GM10248 (cell line): ENCODE measurements at regions of chr11 and their contacts with region 1.

Region 1: GRCh38 chr11:124758317-124759203 is 3.5 kb downstream of the ESAM start:
- DNase-seq: peak; percentile 80
- CTCF ChIP-seq: peak; percentile 90

Region 2: GRCh38 chr11:124633355-124633754 is 125.2 kb before region 1 on chr11:
- CTCF ChIA-PET with region 1: no interaction called
- POLR2A ChIA-PET with region 1: no interaction called
- DNase-seq: no peak
- CTCF ChIP-seq: peak; percentile 12

Region 3: GRCh38 chr11:124739479-124740276 is 18.9 kb before region 1 on chr11 and contains the start of gene NRGN:
- CTCF ChIA-PET with region 1: interaction called, 183 read pairs
- POLR2A ChIA-PET with region 1: no interaction called
- DNase-seq: peak; percentile 95
- CTCF ChIP-seq: no peak

Region 4: GRCh38 chr11:124746621-124747243 is 11.8 kb before region 1 on chr11:
- CTCF ChIA-PET with region 1: interaction called, 183 read pairs
- POLR2A ChIA-PET with region 1: no interaction called
- DNase-seq: peak; percentile 92
- CTCF ChIP-seq: peak; percentile 82

Region 5: DNA sequence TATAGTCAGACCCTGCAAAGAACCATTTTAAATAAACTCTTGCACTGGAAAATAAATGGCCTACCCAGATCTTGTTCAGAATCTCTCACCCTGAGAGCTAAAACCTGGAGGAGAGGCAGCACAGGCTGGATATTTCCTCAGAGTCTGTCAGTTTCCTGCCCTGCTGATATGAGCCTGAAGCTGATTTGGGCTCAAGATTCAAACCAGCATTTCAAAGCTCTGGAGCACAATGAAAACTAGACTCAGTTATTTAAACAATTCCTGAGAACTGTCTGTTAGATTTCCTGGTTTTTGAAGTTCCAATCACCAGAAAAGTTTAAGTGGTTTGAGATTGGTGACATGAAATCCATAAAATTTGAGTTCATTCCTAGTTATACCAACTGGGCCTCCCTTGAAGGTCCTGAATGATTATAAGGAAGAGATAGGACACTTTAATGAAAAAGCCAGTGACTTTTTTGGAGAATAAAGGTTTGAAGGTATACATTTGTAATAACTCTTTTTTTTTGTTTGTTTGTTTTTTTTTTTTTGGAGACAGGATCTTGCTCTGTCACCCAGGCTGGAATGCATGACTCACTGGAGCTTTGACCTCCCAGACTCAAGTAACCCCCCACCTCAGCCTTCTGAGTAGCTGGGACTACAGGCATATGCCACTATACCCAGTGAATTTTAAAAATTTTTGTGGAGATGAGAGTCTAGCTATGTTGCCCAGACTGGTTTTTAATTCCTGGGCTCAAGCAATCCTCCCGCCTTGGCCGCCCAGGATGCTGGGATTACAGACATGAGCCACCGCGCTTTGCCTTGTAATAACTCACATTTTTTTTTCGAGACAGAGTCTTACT is 11.5 kb after region 1 on chr11:
- CTCF ChIA-PET with region 1: interaction called, 183 read pairs
- POLR2A ChIA-PET with region 1: no interaction called
- DNase-seq: no peak
- CTCF ChIP-seq: no peak

Region 6: GRCh38 chr11:124778281-124778680 is 19.7 kb after region 1 on chr11:
- CTCF ChIA-PET with region 1: interaction called, 85 read pairs
- POLR2A ChIA-PET with region 1: no interaction called
- DNase-seq: no peak
- CTCF ChIP-seq: no peak

Region 7: GRCh38 chr11:124788521-124788920 is 30.0 kb after region 1 on chr11:
- CTCF ChIA-PET with region 1: interaction called, 381 read pairs
- POLR2A ChIA-PET with region 1: no interaction called
- DNase-seq: no peak
- CTCF ChIP-seq: no peak

Region 8: GRCh38 chr11:124800226-124800929 is 41.8 kb after region 1 on chr11 and contains the start of gene MSANTD2:
- CTCF ChIA-PET with region 1: interaction called, 381 read pairs
- POLR2A ChIA-PET with region 1: interaction called, 5 read pairs
- DNase-seq: peak; percentile 90
- CTCF ChIP-seq: no peak